ENCODE measurements at regions of chr10 and their contacts with region 1.

Region 1: DNA sequence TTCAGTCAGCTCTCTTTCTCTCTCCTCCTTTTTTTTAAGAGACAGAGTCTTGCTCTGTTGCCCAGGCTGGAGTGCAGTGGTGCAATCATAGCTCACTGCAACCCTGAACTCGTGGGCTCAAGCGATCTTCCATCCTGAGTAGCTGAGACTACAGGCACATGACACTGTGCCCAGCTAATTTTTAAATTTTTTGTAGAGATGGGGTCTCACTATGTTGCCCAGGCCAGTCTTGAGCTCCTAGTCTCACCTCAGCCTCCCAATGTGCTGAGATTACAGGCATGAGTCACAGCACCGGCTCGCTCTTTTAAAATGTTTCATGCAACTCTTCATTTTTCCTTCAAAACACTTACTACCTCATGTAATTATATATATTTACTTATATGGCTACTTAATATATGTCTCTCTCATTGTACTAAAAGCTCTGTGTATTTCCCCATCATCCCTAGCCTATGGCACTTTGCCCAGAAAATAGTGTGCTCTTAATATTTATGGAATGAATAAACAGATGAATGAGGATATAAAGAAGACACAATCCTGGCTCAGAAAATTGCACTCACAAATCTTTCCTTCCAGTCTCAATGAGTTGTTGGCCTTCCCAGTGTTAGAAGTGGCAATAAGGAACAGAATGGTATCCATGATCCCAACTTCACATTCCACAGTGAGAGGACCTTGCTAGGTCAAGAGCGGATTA is 33.9 kb downstream of the EBLN1 start:
- DNase-seq: no peak
- H3K4me3 Mint-ChIP-seq: no peak overlapping the region
- H3K27ac Mint-ChIP-seq: no peak overlapping the region
- H3K4me1 Mint-ChIP-seq: no peaks in the 10 kb centered on the region
- H3K27me3 Mint-ChIP-seq: peaks cover 56% of the 10 kb centered on the region
- CTCF ChIP-seq: no peak

Region 2: DNA sequence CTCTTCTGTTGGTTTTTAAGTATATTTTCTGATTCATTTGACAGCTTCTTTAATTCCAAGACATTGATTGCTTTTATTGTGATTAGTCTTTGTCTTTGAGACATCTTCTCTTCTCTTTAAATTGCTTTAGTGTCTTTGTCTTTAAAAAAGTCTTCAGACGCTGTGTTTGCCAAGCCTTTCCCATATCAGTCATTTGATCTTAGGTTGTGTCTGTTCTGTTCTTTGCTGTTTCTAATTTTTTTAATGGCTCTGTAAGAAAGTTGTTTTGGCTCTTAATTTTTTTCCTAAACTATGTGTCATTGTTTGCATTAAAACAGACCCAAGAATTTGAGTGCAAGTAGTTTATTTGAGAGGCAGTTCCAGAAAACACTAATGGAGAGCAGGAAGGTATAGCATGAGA is 10.4 kb before region 1 on chr10:
- CTCF ChIA-PET with region 1: interaction called, 10 read pairs
- intact Hi-C with region 1: no loop called
- DNase-seq: no peak
- H3K4me3 Mint-ChIP-seq: no peak overlapping the region
- H3K27ac Mint-ChIP-seq: no peak overlapping the region
- H3K4me1 Mint-ChIP-seq: no peaks in the 10 kb centered on the region
- H3K27me3 Mint-ChIP-seq: peaks cover 34% of the 10 kb centered on the region
- CTCF ChIP-seq: no peak

Region 3: GRCh38 chr10:22414146-22414545 is 230.2 kb after region 1 on chr10:
- CTCF ChIA-PET with region 1: no interaction called
- intact Hi-C with region 1: no loop called
- DNase-seq: no peak
- H3K4me3 Mint-ChIP-seq: no peak overlapping the region
- H3K27ac Mint-ChIP-seq: no peak overlapping the region
- H3K4me1 Mint-ChIP-seq: no peaks in the 10 kb centered on the region
- H3K27me3 Mint-ChIP-seq: no peaks in the 10 kb centered on the region
- CTCF ChIP-seq: no peak